ENCODE measurements at regions of chr10 and their contacts with region 1.

Region 1: DNA sequence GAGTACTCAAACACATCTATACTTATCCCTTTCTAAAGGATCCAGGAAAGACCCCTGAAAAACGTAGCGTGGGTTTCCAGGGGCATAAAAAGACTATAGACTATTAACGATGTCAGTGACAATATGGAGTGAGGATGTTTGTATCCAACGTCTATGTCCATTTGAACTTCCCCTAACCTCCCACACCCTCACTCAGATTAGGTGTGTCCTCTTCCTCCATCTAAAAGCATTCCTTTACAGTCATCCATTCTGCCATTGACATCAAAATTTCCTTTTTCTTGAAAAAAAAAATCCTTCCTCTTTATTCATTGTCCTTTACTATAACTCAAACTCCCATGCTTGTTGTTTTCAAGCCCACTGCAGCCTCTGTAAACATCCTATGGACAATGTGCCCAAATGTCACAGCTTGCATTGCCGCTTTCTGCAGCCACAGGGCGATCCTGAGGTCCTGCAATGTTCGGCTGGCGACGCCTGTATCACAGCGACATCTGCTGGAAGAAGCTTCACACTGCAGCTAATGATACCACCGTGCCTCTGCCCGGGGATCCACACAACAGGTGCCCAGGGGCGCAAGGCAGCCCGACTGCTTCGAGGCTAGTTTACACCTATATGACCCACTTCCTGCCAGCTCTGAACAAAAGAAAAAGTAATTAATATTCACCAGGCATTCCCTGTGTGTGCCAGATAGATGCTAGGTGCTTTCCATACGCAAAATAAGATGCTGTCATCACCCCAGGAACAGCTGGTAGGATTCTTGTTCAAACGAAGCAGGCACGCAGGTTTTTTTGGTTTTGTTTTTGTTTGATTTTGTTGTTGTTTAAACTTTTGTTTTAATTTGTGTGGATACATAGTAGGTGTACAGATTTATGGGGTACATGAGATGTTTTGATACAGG is 267.9 kb upstream of the GHITM start:
- DNase-seq: peak; percentile 79
- ATAC-seq: peak; percentile 84
- H3K4me3 Mint-ChIP-seq: no peak overlapping the region
- H3K27ac Mint-ChIP-seq: no peak overlapping the region
- H3K4me1 Mint-ChIP-seq: no peaks in the 10 kb centered on the region
- H3K27me3 Mint-ChIP-seq: no peaks in the 10 kb centered on the region

Region 2: GRCh38 chr10:81920213-81920829 is 1951.1 kb before region 1 on chr10:
- CTCF ChIA-PET with region 1: no interaction called
- POLR2A ChIA-PET with region 1: no interaction called
- intact Hi-C with region 1: loop called in 1 of 2 experiments (anchors 5 kb)
- DNase-seq: peak; percentile 34
- ATAC-seq: no peak
- H3K4me3 Mint-ChIP-seq: no peak overlapping the region
- H3K27ac Mint-ChIP-seq: no peak overlapping the region
- H3K4me1 Mint-ChIP-seq: no peaks in the 10 kb centered on the region
- H3K27me3 Mint-ChIP-seq: peaks cover 4% of the 10 kb centered on the region

Region 3: DNA sequence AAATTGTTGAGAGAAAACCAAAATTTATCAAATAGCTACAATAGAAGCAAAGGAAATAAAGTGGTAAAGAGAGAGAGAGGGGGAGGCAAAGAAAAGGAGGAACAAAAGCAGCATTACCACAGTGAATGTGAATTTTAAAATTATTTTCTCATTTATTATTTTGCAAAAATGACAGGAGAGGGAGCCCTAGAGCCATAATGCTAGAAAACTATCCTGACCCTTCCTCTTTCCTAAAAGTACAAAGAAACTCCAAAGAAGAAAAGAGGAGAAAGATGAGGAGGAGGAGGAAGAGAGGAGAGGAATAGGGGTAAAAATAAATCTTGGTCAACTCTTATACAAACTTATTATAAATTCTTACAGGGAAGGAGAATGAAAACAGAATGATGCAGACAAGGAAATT is 1074.9 kb before region 1 on chr10:
- CTCF ChIA-PET with region 1: no interaction called
- POLR2A ChIA-PET with region 1: no interaction called
- intact Hi-C with region 1: loop called in 1 of 2 experiments (anchors 2 kb)
- DNase-seq: no peak
- ATAC-seq: no peak
- H3K4me3 Mint-ChIP-seq: no peak overlapping the region
- H3K27ac Mint-ChIP-seq: no peak overlapping the region
- H3K4me1 Mint-ChIP-seq: no peaks in the 10 kb centered on the region
- H3K27me3 Mint-ChIP-seq: no peaks in the 10 kb centered on the region

Region 4: GRCh38 chr10:82811621-82812020 is 1059.8 kb before region 1 on chr10:
- CTCF ChIA-PET with region 1: no interaction called
- POLR2A ChIA-PET with region 1: no interaction called
- intact Hi-C with region 1: loop called in 1 of 2 experiments (anchors 5 kb)
- DNase-seq: peak; percentile 25
- ATAC-seq: no peak
- H3K4me3 Mint-ChIP-seq: no peak overlapping the region
- H3K27ac Mint-ChIP-seq: no peak overlapping the region
- H3K4me1 Mint-ChIP-seq: no peaks in the 10 kb centered on the region
- H3K27me3 Mint-ChIP-seq: no peaks in the 10 kb centered on the region

Region 5: DNA sequence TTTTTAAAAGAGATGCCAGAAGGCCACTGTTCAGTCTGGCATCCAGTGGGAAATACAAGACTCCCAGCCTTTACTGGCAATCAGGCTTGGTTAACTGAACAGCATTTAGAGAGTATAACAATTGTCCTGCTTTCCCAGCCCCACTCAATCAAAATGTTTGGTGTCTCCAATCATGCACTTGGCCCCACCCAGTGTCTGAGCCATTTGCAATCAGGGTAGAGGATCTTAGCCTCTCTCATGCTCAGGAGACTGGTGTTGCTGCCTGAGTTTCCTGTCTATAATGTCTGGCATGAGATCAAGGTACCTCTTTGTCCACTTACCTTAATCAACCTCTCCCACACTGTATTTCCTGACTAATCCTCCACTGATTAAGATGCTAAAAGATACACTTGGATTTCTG is 22.3 kb before region 1 on chr10:
- CTCF ChIA-PET with region 1: interaction called, 13 read pairs
- POLR2A ChIA-PET with region 1: no interaction called
- intact Hi-C with region 1: no loop called
- DNase-seq: no peak
- ATAC-seq: no peak
- H3K4me3 Mint-ChIP-seq: no peak overlapping the region
- H3K27ac Mint-ChIP-seq: no peak overlapping the region
- H3K4me1 Mint-ChIP-seq: no peaks in the 10 kb centered on the region
- H3K27me3 Mint-ChIP-seq: no peaks in the 10 kb centered on the region

Region 6: GRCh38 chr10:83896219-83896618 is 24.8 kb after region 1 on chr10:
- CTCF ChIA-PET with region 1: no interaction called
- POLR2A ChIA-PET with region 1: no interaction called
- intact Hi-C with region 1: no loop called
- DNase-seq: no peak
- ATAC-seq: no peak
- H3K4me3 Mint-ChIP-seq: no peak overlapping the region
- H3K27ac Mint-ChIP-seq: no peak overlapping the region
- H3K4me1 Mint-ChIP-seq: no peaks in the 10 kb centered on the region
- H3K27me3 Mint-ChIP-seq: no peaks in the 10 kb centered on the region